Panc1 (cell line): ENCODE measurements at regions of chr3 and their contacts with region 1.

Region 1: GRCh38 chr3:64575211-64575844 is 112.5 kb downstream of the ADAMTS9 start:
- DNase-seq: peak; percentile 4
- ATAC-seq: no peak
- H3K4me3 ChIP-seq: no peak overlapping the region
- H3K27ac ChIP-seq: no peak overlapping the region
- H3K4me1 ChIP-seq: no peaks in the 10 kb centered on the region
- H3K27me3 ChIP-seq: no peaks in the 10 kb centered on the region
- CTCF ChIP-seq: peak; percentile 47

Region 2: DNA sequence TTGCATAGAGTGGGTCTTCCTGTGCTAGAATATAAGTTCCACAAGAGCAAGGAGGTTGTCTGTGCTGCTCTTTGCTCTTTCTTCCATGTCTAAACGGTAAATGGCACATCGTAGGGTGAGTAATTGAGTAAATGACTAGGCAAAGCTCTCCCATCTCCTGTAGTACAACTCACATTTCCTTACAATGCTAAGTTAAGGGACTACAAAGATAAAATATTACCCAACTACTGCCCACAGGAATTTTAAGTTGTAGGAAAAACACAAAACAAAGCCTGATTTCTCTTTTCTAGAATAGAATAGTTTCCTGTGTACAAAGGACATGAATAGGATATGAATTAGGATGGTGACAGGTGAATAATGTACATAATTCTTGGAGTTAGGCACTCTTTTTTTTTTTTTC is 1945.4 kb after region 1 on chr3:
- CTCF ChIA-PET with region 1: no interaction called
- POLR2A ChIA-PET with region 1: interaction called, 13 read pairs
- in situ Hi-C with region 1: no loop called
- intact Hi-C with region 1: no loop called
- DNase-seq: no peak
- ATAC-seq: no peak
- H3K4me3 ChIP-seq: no peak overlapping the region
- H3K27ac ChIP-seq: no peak overlapping the region
- H3K4me1 ChIP-seq: no peaks in the 10 kb centered on the region
- H3K27me3 ChIP-seq: no peaks in the 10 kb centered on the region; the same call in 1 of the 2 replicates
- CTCF ChIP-seq: no peak